H1 (cell line): ENCODE measurements at regions of chr5 and their contacts with region 1.

Region 1: GRCh38 chr5:9356351-9356825 is 189.5 kb downstream of the SEMA5A start:
- DNase-seq: no peak
- H3K4me3 ChIP-seq: no peak overlapping the region
- H3K27ac ChIP-seq: no peak overlapping the region
- H3K4me1 ChIP-seq: no peaks in the 10 kb centered on the region
- H3K27me3 ChIP-seq: no peaks in the 10 kb centered on the region
- CTCF ChIP-seq: no peak
- EP300 ChIP-seq: no peak
- POLR2A ChIP-seq: no peak
- RAD21 ChIP-seq: no peak

Region 2: GRCh38 chr5:9343146-9343850 is 13.1 kb before region 1 on chr5:
- CTCF ChIA-PET with region 1: interaction called, 15 read pairs
- POLR2A ChIA-PET with region 1: no interaction called
- DNase-seq: no peak
- H3K4me3 ChIP-seq: no peak overlapping the region
- H3K27ac ChIP-seq: no peak overlapping the region
- H3K4me1 ChIP-seq: no peaks in the 10 kb centered on the region; a peak in 1 of 7 replicates
- H3K27me3 ChIP-seq: no peaks in the 10 kb centered on the region
- CTCF ChIP-seq: no peak
- EP300 ChIP-seq: no peak
- POLR2A ChIP-seq: no peak
- RAD21 ChIP-seq: no peak